ENCODE measurements at regions of chr2 and their contacts with region 1.

Region 1: GRCh38 chr2:198127627-198128026 is 323.2 kb downstream of the PLCL1 start:
- DNase-seq: peak; percentile 24
- H3K4me3 ChIP-seq: no peak overlapping the region
- H3K27ac ChIP-seq: no peak overlapping the region
- H3K4me1 ChIP-seq: no peaks in the 10 kb centered on the region
- H3K27me3 ChIP-seq: no peaks in the 10 kb centered on the region
- CTCF ChIP-seq: no peak

Region 2: DNA sequence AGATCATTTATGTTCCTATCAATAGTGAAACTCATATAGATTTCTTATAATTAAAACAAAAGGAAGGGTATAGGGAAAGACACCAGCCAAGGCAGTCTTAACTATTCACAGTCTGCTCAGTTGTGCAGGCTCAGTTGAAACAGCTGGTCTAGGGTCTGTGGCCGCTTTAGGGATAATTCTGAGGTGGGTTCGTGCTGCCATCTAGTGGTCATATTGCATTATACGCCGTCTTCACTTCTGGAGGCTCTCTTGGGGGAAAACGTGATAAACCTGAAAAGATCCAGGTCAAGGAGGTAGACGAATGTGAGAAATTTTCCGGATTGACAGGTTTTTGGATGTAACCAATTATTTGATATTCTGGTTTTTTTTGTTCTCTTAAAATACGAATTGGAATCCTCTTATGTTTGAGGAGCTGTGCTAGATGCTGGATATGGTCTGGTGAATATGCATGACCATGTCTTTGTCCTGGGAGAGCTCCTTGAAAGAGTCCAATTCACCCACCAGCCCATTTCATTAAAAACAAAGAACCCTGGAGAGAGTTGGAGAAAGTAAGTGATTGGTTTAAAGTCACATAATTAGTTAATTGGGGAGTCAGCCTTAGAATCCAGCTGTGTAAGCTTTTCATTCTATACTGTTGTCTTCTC is 169.2 kb after region 1 on chr2:
- intact Hi-C with region 1: loop called (anchors 10 kb)
- DNase-seq: peak; percentile 56
- H3K4me3 ChIP-seq: no peak overlapping the region
- H3K27ac ChIP-seq: no peak overlapping the region
- H3K4me1 ChIP-seq: no peaks in the 10 kb centered on the region
- H3K27me3 ChIP-seq: no peaks in the 10 kb centered on the region
- CTCF ChIP-seq: peak; percentile 78

Measured in colonic mucosa (tissue), 4 donors.